Transverse colon (tissue), 4 donors: ENCODE measurements at regions of chr9 and their contacts with region 1.

Region 1: DNA sequence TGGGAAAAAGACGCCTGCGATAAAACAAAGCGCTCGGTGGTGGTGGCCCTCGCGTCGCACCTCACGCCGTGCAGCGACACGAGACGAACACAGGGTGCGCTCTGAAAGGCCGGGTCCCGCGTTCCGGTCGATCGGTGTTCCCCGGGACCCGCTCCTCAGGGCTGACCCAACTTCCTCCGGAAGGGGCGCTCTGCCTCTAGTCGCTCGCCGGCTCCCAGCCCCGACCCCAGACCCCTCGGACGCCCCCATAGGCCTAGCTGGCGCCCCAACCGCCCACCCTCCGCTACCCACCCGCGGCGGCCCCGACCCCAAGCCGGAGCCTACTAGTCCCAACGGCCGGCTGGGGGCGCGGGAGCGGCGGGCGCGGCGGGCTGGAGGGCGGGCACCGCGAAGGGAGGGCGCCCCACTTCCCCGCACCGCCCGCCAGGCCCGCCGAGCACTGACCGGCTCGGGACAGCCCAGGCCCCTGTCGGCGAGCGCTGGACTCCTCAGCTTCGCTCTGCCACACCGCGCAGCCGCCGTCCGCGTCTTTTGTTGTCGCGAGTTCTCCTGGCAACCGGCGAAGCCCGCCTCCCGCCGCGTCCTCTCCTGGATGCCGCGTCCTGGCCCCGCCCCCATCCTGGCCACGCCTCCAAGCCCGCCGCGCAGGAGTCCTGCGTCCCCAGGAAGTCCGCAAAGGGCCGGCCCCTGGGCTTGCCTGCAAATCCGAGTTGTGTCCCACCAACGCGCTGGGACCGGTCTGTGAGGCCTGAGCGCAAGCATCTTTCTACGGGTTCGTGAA is at the start of gene KIF27:
- DNase-seq: peak; percentile 99
- H3K4me3 ChIP-seq: peak within 1 kb of the TSS; percentile 61 to 96 (median 88)
- H3K27ac ChIP-seq: peak within 1 kb of the TSS; percentile 93 to 99 (median 98)
- H3K4me1 ChIP-seq: peaks cover 0 to 13% (median 6%) of the 10 kb centered on the region in 4 donors
- H3K27me3 ChIP-seq: no peaks in the 10 kb centered on the region
- CTCF ChIP-seq: peak in 4 of 5 experiments; percentile 7 to 58 (median 36)
- EP300 ChIP-seq: no peak
- POLR2A ChIP-seq: peak; percentile 77
- total RNA-seq, gene KIF27: 0.75 to 5.2 (median 3.6) TPM

Region 2: DNA sequence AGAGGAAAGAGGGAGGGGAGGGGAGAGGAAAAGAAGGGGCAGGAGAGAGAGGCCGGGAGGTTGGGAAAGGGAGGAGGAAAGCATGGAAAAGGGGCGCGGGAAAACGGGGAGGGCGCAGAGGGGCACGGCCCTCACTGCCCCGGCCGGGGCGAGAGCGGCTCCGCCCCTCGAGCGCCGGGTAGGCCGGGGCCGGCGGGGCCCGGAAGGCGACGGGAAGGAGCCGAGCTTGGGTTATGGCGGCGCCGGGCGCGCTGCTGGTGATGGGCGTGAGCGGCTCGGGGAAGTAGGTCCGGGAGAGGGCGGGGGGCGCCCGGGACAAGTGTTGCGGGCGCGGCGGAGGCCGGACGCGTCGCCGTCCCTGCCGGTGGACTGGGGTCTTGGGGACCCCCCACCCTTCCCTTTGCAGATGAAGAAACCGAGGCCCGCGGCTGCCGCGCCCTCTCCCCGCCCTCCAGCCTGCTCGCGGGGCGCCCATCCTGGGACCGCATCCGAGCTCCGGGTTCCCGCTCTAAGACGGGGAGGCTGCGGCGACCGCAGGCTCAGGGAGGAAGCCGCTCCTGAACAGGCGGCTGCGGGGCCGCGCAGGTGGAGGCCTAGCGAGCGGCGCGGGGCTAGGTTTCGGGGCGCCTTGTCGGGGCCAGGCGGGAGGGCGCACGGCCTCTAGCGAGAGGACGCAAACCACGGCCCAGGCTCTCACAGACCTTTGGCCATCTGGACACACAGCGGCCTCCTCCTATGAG is 298.0 kb before region 1 on chr9 and contains the start of gene IDNK:
- in situ Hi-C with region 1: loop called in 3 of 4 experiments (anchors 10 to 25 kb)
- intact Hi-C with region 1: no loop called
- DNase-seq: peak; percentile 48
- H3K4me3 ChIP-seq: peak within 1 kb of the TSS; percentile 63 to 82 (median 76)
- H3K27ac ChIP-seq: peak within 1 kb of the TSS; percentile 90 to 94 (median 92)
- H3K4me1 ChIP-seq: peaks cover 0 to 28% (median 17%) of the 10 kb centered on the region in 4 donors
- H3K27me3 ChIP-seq: no peaks in the 10 kb centered on the region
- CTCF ChIP-seq: no peak
- EP300 ChIP-seq: no peak
- POLR2A ChIP-seq: peak; percentile 47
- total RNA-seq, gene IDNK: 4.6 to 18.7 TPM in 2 of 4 donors, not detected in the others

Region 3: GRCh38 chr9:84862810-84863287 is 941.7 kb after region 1 on chr9:
- in situ Hi-C with region 1: no loop called
- intact Hi-C with region 1: loop called (anchors 10 kb)
- DNase-seq: no peak
- H3K4me3 ChIP-seq: no peak overlapping the region
- H3K27ac ChIP-seq: no peak overlapping the region
- H3K4me1 ChIP-seq: no peaks in the 10 kb centered on the region
- H3K27me3 ChIP-seq: no peaks in the 10 kb centered on the region
- CTCF ChIP-seq: no peak
- EP300 ChIP-seq: no peak
- POLR2A ChIP-seq: no peak